Activated CD4-positive, alpha-beta memory T cell treated with anti-CD3 and anti-CD28 coated beads for 36 hours (primary cell): ENCODE measurements at regions of chr1 and their contacts with region 1.

Region 1: GRCh38 chr1:27300341-27301051 is 21.5 kb upstream of the TMEM222 start:
- DNase-seq: peak; percentile 83
- H3K4me3 Mint-ChIP-seq: no peak overlapping the region
- H3K27ac Mint-ChIP-seq: no peak overlapping the region
- H3K4me1 Mint-ChIP-seq: no peaks in the 10 kb centered on the region
- H3K27me3 Mint-ChIP-seq: no peaks in the 10 kb centered on the region

Region 2: DNA sequence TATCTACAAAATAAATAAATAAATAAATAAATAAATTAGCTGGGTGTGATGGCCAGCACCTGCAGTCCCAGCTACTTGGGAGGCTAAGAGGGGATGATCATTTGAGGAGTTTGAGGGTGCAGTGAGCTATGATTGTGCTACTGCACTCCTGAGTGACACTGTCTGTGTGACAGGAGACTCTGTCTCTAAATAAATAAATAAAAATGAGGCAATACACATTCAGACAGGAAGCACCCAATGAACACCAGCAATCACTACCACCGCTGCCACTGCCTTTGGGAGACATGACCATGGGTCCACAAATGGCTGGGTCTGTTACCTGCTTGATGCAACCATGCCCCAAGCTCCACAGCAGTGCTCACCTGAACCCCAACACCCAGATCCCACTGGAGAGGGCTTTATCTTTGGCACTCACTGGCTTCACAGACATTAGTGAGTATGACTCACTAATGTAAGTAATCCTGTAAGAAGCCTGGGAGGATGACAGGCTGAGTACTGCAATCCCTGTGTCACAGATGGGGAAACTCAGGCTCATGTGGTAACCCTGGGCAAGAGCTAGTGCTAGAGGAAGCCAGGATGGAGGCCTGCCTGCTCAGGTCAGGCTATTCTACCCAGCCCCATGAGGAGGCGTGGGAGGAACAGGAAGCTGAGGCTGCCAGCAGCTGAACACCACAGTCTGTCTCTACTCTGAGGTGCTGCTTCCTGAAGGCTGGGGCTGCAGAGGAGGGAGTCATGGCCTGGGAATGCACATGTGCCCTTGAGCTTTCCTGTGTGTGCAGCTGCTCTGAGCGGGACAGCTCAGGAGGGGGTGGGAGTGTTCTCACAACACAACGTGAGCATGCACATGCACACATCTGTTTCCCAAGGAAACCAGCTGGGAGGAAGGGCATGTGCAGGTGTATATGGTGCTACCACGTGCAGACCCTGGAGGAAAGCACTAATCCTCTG is 188.6 kb before region 1 on chr1:
- CTCF ChIA-PET with region 1: interaction called, 16 read pairs
- POLR2A ChIA-PET with region 1: no interaction called
- intact Hi-C with region 1: no loop called
- DNase-seq: peak; percentile 89
- H3K4me3 Mint-ChIP-seq: no peak overlapping the region
- H3K27ac Mint-ChIP-seq: peak overlapping the region; percentile 83
- H3K4me1 Mint-ChIP-seq: peaks cover 40% of the 10 kb centered on the region
- H3K27me3 Mint-ChIP-seq: no peaks in the 10 kb centered on the region

Region 3: GRCh38 chr1:27314169-27314568 is 13.7 kb after region 1 on chr1:
- CTCF ChIA-PET with region 1: interaction called, 55 read pairs
- POLR2A ChIA-PET with region 1: no interaction called
- intact Hi-C with region 1: no loop called
- DNase-seq: no peak
- H3K4me3 Mint-ChIP-seq: no peak overlapping the region
- H3K27ac Mint-ChIP-seq: no peak overlapping the region
- H3K4me1 Mint-ChIP-seq: no peaks in the 10 kb centered on the region
- H3K27me3 Mint-ChIP-seq: no peaks in the 10 kb centered on the region

Region 4: DNA sequence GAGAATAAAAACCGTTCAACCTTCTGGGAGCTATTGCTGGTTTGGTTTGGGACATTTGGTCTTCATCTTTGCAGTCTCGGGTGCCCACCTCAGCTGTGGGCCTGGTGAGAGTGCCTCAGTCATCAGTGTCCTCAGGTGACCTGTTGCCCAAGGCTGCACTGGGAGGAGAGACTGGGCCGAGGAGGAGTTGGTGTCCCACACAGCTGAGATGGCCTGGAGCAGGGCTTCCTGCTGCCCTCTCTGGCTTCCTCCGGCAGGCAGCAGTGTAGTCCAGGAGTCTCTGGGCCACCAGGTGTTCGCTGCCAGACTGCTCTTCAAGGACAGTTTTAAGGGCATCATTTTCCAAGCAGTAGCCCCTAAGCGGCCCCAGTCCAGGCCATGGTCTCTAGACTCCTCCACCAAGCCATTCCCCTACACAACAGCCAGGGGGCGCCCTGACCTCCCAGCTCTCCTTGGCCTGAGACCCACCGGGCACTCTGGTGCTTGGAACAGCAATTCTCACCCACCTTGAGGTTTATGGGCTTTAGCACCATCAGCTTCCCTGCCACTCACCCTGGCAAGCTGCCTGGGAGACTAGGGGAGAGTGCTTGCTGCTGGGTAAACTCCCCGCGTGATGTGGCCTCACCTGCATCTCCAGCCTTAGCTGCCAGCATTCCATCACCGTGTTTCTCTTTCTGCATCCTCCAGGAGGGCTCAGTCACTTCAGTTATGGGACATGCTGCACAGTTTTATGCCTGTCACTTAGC is 32.2 kb after region 1 on chr1:
- CTCF ChIA-PET with region 1: interaction called, 31 read pairs
- POLR2A ChIA-PET with region 1: no interaction called
- intact Hi-C with region 1: no loop called
- DNase-seq: peak; percentile 69
- H3K4me3 Mint-ChIP-seq: no peak overlapping the region
- H3K27ac Mint-ChIP-seq: no peak overlapping the region
- H3K4me1 Mint-ChIP-seq: peaks cover 24% of the 10 kb centered on the region
- H3K27me3 Mint-ChIP-seq: no peaks in the 10 kb centered on the region

Region 5: GRCh38 chr1:27365372-27366112 is 65.0 kb after region 1 on chr1:
- CTCF ChIA-PET with region 1: interaction called, 24 read pairs
- POLR2A ChIA-PET with region 1: no interaction called
- intact Hi-C with region 1: no loop called
- DNase-seq: peak; percentile 92
- H3K4me3 Mint-ChIP-seq: peak overlapping the region; percentile 85
- H3K27ac Mint-ChIP-seq: peak overlapping the region; percentile 66
- H3K4me1 Mint-ChIP-seq: peaks cover 18% of the 10 kb centered on the region
- H3K27me3 Mint-ChIP-seq: no peaks in the 10 kb centered on the region

Region 6: GRCh38 chr1:27556781-27557595 is 256.5 kb after region 1 on chr1:
- CTCF ChIA-PET with region 1: interaction called, 12 read pairs
- POLR2A ChIA-PET with region 1: no interaction called
- intact Hi-C with region 1: no loop called
- DNase-seq: peak; percentile 81
- H3K4me3 Mint-ChIP-seq: no peak overlapping the region
- H3K27ac Mint-ChIP-seq: peak overlapping the region; percentile 49
- H3K4me1 Mint-ChIP-seq: peaks cover 17% of the 10 kb centered on the region
- H3K27me3 Mint-ChIP-seq: no peaks in the 10 kb centered on the region